ENCODE measurements at regions of chr4 and their contacts with region 1.

Region 1: DNA sequence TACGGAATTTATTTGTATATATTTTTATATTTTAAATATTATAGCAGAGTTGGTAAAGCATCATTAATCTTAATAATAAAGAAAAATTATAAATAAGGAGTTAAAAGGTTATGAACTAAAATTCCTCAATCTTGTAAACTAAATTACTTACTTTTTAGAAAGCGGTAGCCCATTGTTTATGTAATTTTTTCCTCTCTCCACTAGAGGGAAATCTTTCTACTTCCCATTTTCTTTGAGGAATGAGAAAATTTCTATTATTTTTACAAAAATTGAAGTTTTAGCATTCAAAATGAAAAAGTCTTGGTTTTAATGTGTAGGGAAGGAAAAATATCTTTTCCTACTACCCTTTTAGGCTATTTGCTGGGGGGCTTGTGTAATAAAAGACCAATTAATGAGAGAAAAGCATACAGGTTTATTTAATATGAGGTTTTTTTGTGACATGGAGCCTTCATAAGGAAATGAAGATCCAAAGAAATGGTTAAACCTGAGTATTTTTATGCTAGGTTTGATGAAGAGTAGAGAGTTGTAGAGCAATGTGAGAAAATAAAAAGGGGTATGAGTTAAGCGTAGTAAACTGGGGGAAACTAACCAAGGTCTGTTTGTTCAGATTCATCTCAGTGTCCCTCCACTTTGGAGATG is 68.7 kb upstream of the ADAD1 start:
- DNase-seq: no peak
- H3K4me3 Mint-ChIP-seq: no peak overlapping the region
- H3K27ac Mint-ChIP-seq: peak overlapping the region; percentile 57
- H3K4me1 Mint-ChIP-seq: peaks cover 8% of the 10 kb centered on the region
- H3K27me3 Mint-ChIP-seq: no peaks in the 10 kb centered on the region

Region 2: GRCh38 chr4:121950212-121950679 is 359.9 kb before region 1 on chr4:
- CTCF ChIA-PET with region 1: no interaction called
- intact Hi-C with region 1: loop called (anchors 5 kb)
- DNase-seq: peak; percentile 92
- H3K4me3 Mint-ChIP-seq: peak overlapping the region; percentile 86
- H3K27ac Mint-ChIP-seq: no peak overlapping the region
- H3K4me1 Mint-ChIP-seq: peaks cover 5% of the 10 kb centered on the region
- H3K27me3 Mint-ChIP-seq: peaks cover 32% of the 10 kb centered on the region

Region 3: GRCh38 chr4:122450847-122451246 is 140.7 kb after region 1 on chr4:
- CTCF ChIA-PET with region 1: interaction called, 3 read pairs
- intact Hi-C with region 1: loop called (anchors 1 kb)
- DNase-seq: peak; percentile 59
- H3K4me3 Mint-ChIP-seq: peak overlapping the region; percentile 67
- H3K27ac Mint-ChIP-seq: peak overlapping the region; percentile 96
- H3K4me1 Mint-ChIP-seq: peaks cover 17% of the 10 kb centered on the region
- H3K27me3 Mint-ChIP-seq: no peaks in the 10 kb centered on the region

Region 4: GRCh38 chr4:122508083-122508482 is 198.0 kb after region 1 on chr4:
- CTCF ChIA-PET with region 1: no interaction called
- intact Hi-C with region 1: loop called (anchors 1 kb)
- DNase-seq: no peak
- H3K4me3 Mint-ChIP-seq: peak overlapping the region; percentile 53
- H3K27ac Mint-ChIP-seq: peak overlapping the region; percentile 98
- H3K4me1 Mint-ChIP-seq: peaks cover 89% of the 10 kb centered on the region
- H3K27me3 Mint-ChIP-seq: no peaks in the 10 kb centered on the region

Region 5: GRCh38 chr4:122542411-122543236 is 232.5 kb after region 1 on chr4:
- CTCF ChIA-PET with region 1: no interaction called
- intact Hi-C with region 1: loop called (anchors 1 kb)
- DNase-seq: no peak
- H3K4me3 Mint-ChIP-seq: peak overlapping the region; percentile 52
- H3K27ac Mint-ChIP-seq: peak overlapping the region; percentile 100
- H3K4me1 Mint-ChIP-seq: peaks cover 94% of the 10 kb centered on the region
- H3K27me3 Mint-ChIP-seq: no peaks in the 10 kb centered on the region

Region 6: DNA sequence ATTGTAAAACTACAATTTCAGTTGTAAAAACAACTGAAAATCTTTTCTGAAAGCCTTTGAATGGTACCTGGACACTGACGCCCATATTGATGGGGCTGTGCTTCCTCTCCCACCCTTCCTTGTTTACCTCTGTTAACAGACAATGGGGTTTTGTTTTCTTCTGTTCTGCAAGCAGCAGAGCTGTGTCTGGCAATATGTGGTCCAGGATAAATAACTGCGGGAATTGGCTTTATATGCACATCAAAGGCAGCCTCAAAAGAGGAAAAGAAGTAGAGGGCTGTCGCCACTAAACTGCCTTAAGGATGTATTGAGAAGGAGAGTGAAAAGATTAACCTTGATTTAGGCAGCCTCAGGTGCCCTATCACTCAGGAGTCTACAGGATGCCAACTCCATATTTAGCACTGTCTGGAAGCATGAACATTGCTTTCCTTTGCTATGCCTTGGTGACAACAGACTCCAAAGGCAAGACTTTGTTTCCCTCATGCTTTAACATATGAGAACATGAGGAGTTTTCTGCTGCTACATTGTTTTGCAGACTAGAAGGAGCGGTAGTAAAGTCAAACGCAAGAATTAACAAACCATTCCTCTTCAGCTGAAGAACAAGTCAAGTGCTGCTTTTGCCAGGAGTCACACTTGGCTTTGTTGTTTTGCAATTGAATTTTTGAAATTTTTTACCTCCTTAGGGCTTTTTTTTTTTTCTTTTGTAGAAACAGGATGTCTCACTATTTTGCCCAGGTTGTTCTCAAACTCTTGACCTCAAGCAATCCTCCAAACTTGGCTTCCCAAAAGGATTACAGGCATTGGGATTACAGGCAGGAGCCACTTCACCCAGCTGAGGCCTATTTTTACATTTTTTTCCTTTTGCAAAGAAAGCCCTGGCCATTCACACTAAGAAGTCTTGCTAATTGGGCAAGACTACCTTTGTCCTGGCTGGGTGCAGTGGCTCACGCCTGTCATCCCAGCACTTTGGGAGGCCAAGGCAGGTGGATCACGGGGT is 307.8 kb after region 1 on chr4:
- CTCF ChIA-PET with region 1: no interaction called
- intact Hi-C with region 1: no loop called
- DNase-seq: no peak
- H3K4me3 Mint-ChIP-seq: peak overlapping the region; percentile 88
- H3K27ac Mint-ChIP-seq: peak overlapping the region; percentile 97
- H3K4me1 Mint-ChIP-seq: peaks cover 70% of the 10 kb centered on the region
- H3K27me3 Mint-ChIP-seq: no peaks in the 10 kb centered on the region

Region 7: GRCh38 chr4:122658818-122659295 is 348.8 kb after region 1 on chr4:
- CTCF ChIA-PET with region 1: no interaction called
- intact Hi-C with region 1: loop called (anchors 5 kb)
- DNase-seq: no peak
- H3K4me3 Mint-ChIP-seq: peak overlapping the region; percentile 46
- H3K27ac Mint-ChIP-seq: peak overlapping the region; percentile 95
- H3K4me1 Mint-ChIP-seq: peaks cover 62% of the 10 kb centered on the region
- H3K27me3 Mint-ChIP-seq: no peaks in the 10 kb centered on the region

Region 8: DNA sequence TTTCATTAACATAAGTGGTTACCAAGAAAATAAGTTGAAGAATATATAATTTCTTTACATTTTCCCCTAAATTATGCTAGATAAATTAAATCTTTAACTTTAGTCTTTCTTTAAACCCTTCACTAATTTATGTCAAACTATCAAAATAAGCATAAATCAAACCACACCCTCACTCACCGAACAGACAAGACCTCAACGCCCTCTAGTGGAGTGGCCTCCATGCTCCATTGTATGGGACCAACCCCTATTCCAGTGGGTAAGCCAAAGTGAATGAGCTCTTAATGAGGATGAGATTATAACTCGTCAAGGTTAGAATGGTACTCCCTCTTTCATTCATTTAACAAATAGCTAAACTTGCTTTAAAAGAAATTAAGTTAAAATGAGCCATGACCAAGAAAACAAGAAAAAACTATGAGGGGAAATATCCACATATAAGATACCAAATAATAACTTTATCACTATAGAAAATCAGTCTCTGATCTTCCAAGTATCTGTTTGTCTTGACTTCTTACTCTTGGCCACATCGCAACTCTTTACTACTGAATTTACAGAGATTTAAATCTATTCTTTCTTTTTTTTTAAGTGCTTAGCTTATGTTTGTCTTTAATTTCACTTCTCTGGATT is 406.8 kb after region 1 on chr4:
- CTCF ChIA-PET with region 1: no interaction called
- intact Hi-C with region 1: loop called (anchors 2 kb)
- DNase-seq: peak; percentile 94
- H3K4me3 Mint-ChIP-seq: no peak overlapping the region
- H3K27ac Mint-ChIP-seq: peak overlapping the region; percentile 65
- H3K4me1 Mint-ChIP-seq: peaks cover 41% of the 10 kb centered on the region
- H3K27me3 Mint-ChIP-seq: no peaks in the 10 kb centered on the region

Measured in activated naive CD4-positive, alpha-beta T cell treated with anti-CD3 and anti-CD28 coated beads for 36 hours (primary cell).